Breast epithelium (tissue), 4 donors: ENCODE measurements at regions of chr19 and their contacts with region 1.

Region 1: DNA sequence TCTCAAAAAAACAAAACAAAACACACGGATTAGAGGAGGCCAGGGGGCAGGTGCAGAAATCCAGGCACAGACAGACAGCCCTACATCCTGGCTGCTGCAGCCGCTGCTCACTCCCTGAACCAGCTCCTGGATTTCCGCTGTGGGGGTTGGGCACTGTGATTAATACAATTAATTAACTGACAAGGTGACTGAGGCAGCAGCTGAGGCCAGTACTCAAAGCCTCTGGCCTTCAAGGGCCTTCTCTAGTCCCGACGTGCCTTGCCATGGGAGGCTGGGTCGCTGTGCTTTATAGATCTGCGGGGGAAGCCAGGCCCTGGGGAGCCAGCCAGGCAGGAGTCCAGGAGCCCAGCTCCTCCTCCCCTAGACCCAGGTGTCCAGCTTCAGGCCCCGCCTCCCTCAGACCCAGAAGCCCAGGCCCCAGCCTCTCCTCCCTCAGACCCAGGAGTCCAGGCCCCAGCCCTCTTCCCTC is 4.6 kb downstream of the NECTIN2 start:
- DNase-seq: no peak
- H3K4me3 ChIP-seq: peak overlapping the region in 1 of 3 donors; percentile 15
- H3K27ac ChIP-seq: peak overlapping the region; percentile 68 to 100
- H3K4me1 ChIP-seq: peaks cover 0 to 5% of the 10 kb centered on the region in 2 donors
- H3K27me3 ChIP-seq: no peaks in the 10 kb centered on the region
- CTCF ChIP-seq: no peak
- POLR2A ChIP-seq: no peak

Region 2: DNA sequence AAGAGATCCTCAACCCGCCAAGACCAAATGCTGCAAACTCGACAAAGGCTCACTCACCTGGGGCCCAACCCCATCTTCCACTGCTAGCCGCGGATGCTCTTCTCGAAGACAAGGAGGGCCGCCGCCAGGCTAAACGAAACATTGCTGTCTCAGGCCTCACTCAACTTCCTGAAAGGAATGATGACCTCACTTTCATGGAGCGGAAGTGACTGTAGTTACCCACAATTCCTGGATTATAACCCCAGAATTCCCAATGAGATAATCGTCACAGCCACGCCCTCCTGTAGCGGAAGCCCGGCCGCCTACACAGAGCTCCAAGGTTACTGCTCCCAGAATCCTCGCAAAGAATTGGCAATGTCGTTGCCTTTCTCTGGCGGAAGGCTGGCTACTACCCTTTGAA is 483.7 kb before region 1 on chr19:
- intact Hi-C with region 1: no loop called
- DNase-seq: no peak
- H3K4me3 ChIP-seq: no peak overlapping the region
- H3K27ac ChIP-seq: no peak overlapping the region
- H3K4me1 ChIP-seq: no peaks in the 10 kb centered on the region
- H3K27me3 ChIP-seq: no peaks in the 10 kb centered on the region
- CTCF ChIP-seq: no peak
- POLR2A ChIP-seq: no peak

Region 3: GRCh38 chr19:44808463-44809371 is 42.0 kb before region 1 on chr19 and contains the start of gene BCAM:
- intact Hi-C with region 1: no loop called
- DNase-seq: peak; percentile 64 to 81
- H3K4me3 ChIP-seq: peak within 1 kb of the TSS; percentile 54 to 84 (median 60)
- H3K27ac ChIP-seq: peak within 1 kb of the TSS; percentile 86 to 88
- H3K4me1 ChIP-seq: peaks cover 4 to 10% of the 10 kb centered on the region in 2 donors
- H3K27me3 ChIP-seq: no peaks in the 10 kb centered on the region
- CTCF ChIP-seq: no peak
- POLR2A ChIP-seq: no peak
- total RNA-seq, gene BCAM: 17.1 to 102 (median 75.4) TPM

Region 4: DNA sequence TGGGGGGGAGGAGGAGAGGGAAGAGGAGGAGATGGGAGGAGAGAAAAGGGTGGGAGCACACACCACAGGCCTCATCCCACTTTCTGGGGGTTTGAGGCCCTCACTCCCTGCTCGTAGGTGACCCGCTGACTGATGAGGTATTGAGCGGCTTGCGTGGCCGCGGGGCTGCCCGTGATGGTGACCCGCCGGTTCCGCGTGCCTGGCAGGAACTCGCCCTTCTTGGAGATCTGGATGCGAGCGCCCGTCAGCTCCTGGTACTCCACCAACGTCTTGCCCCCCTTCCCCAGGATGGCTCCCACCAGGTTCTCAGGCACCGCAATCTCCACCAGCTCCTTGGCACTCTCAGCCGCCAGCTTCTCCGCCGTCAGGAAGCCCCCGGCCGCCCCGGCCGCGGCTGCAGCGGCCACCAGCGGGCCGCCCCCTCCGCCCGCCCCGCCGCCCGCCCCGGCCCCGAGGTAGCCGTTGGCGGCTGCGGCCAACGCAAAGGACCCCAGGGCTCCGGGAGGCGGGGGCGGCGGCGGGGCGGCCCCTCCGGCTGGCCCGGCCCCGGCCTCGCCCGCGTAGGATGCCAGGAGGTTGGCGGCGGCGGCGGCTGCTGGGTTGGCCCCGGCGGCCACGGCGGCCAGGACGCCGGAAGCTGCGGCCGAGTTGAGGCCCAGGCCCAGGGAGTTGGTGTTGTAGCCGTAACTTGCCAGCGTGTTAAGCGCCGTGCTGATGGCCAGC is 1089.3 kb after region 1 on chr19:
- intact Hi-C with region 1: loop called (anchors 5 kb)
- DNase-seq: no peak
- H3K4me3 ChIP-seq: peak overlapping the region in 2 of 3 donors; percentile 35 to 54
- H3K27ac ChIP-seq: no peak overlapping the region
- H3K4me1 ChIP-seq: no peaks in the 10 kb centered on the region
- H3K27me3 ChIP-seq: peaks cover 0 to 45% of the 10 kb centered on the region in 2 donors
- CTCF ChIP-seq: no peak
- POLR2A ChIP-seq: no peak